ENCODE measurements at regions of chr3 and their contacts with region 1.

Region 1: GRCh38 chr3:150345021-150345539 is 63.0 kb upstream of the TSC22D2 start:
- DNase-seq: peak; percentile 98
- ATAC-seq: peak; percentile 71
- H3K4me3 ChIP-seq: peak overlapping the region in 1 of 2 experiments; percentile 43; a peak in 2 of 4 replicates
- H3K27ac ChIP-seq: peak overlapping the region; percentile 39; the same call in 1 of the 2 replicates
- H3K4me1 ChIP-seq: peaks cover 58 to 75% of the 10 kb centered on the region in 2 experiments
- H3K27me3 ChIP-seq: no peaks in the 10 kb centered on the region
- CTCF ChIP-seq: no peak
- POLR2A ChIP-seq: no peak
- RAD21 ChIP-seq: peak; percentile 51

Region 2: GRCh38 chr3:149832086-149832485 is 513.0 kb before region 1 on chr3:
- CTCF ChIA-PET with region 1: no interaction called
- POLR2A ChIA-PET with region 1: no interaction called
- RAD21 ChIA-PET with region 1: no interaction called
- intact Hi-C with region 1: no loop called
- DNase-seq: no peak
- ATAC-seq: no peak
- H3K4me3 ChIP-seq: no peak overlapping the region
- H3K27ac ChIP-seq: no peak overlapping the region
- H3K4me1 ChIP-seq: no peaks in the 10 kb centered on the region
- H3K27me3 ChIP-seq: no peaks in the 10 kb centered on the region
- CTCF ChIP-seq: no peak
- POLR2A ChIP-seq: no peak
- RAD21 ChIP-seq: no peak

Region 3: DNA sequence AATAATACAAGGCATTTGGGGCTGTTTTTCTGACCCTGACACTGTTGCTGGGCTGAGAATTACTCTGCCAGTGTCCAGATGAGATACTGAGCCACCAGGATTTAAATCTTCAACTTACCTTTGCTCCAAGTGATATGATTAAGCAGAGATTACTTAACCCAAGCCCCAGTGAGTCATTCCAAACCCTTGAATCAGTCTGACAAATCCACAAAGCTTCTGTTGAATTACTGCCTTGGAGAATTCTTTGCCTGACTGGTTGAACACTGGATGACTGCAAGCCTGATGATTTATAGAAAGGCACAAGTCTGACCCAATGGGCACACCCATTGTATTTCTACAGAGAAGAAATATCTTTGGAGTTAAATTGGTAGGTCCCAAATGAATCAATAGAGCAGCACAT is 25.2 kb before region 1 on chr3:
- CTCF ChIA-PET with region 1: no interaction called
- POLR2A ChIA-PET with region 1: no interaction called
- RAD21 ChIA-PET with region 1: no interaction called
- intact Hi-C with region 1: loop called (anchors 2 kb)
- DNase-seq: peak; percentile 95
- ATAC-seq: peak; percentile 96
- H3K4me3 ChIP-seq: peak overlapping the region in 1 of 2 experiments; percentile 25; a peak in 2 of 4 replicates
- H3K27ac ChIP-seq: no peak overlapping the region
- H3K4me1 ChIP-seq: peaks cover 4 to 19% of the 10 kb centered on the region in 2 experiments
- H3K27me3 ChIP-seq: no peaks in the 10 kb centered on the region
- CTCF ChIP-seq: no peak
- POLR2A ChIP-seq: no peak
- RAD21 ChIP-seq: peak; percentile 36; the same call in 1 of the 2 replicates

Region 4: GRCh38 chr3:150371741-150372254 is 26.7 kb after region 1 on chr3:
- CTCF ChIA-PET with region 1: interaction called, 4 read pairs
- POLR2A ChIA-PET with region 1: interaction called, 3 read pairs
- RAD21 ChIA-PET with region 1: no interaction called
- intact Hi-C with region 1: loop called (anchors 2 kb)
- DNase-seq: peak; percentile 87
- ATAC-seq: peak; percentile 54
- H3K4me3 ChIP-seq: peak overlapping the region; percentile 40 to 57
- H3K27ac ChIP-seq: peak overlapping the region; percentile 66; the same call in 1 of the 2 replicates
- H3K4me1 ChIP-seq: peaks cover 36 to 53% of the 10 kb centered on the region in 2 experiments
- H3K27me3 ChIP-seq: no peaks in the 10 kb centered on the region
- CTCF ChIP-seq: no peak
- POLR2A ChIP-seq: peak; percentile 18
- RAD21 ChIP-seq: 0 out of 2 replicates have a peak, but pooled peaks have one; percentile 7